Endothelial cell of umbilical vein (primary cell): ENCODE measurements at regions of chr7 and their contacts with region 1.

Region 1: GRCh38 chr7:131040467-131040932 is 287.2 kb upstream of the MKLN1 start:
- DNase-seq: peak; percentile 82
- H3K4me3 ChIP-seq: no peak overlapping the region
- H3K27ac ChIP-seq: no peak overlapping the region
- H3K4me1 ChIP-seq: peaks cover 9% of the 10 kb centered on the region
- H3K27me3 ChIP-seq: no peaks in the 10 kb centered on the region
- CTCF ChIP-seq: peak; percentile 81 to 83
- POLR2A ChIP-seq: no peak

Region 2: GRCh38 chr7:130838738-130839137 is 201.8 kb before region 1 on chr7:
- CTCF ChIA-PET with region 1: interaction called, 3 read pairs
- POLR2A ChIA-PET with region 1: no interaction called
- dilution Hi-C with region 1: no loop called
- intact Hi-C with region 1: loop called (anchors 5 kb)
- DNase-seq: peak; percentile 62
- H3K4me3 ChIP-seq: no peak overlapping the region
- H3K27ac ChIP-seq: peak overlapping the region; percentile 64
- H3K4me1 ChIP-seq: peaks cover 31% of the 10 kb centered on the region
- H3K27me3 ChIP-seq: no peaks in the 10 kb centered on the region
- CTCF ChIP-seq: no peak
- POLR2A ChIP-seq: no peak

Region 3: DNA sequence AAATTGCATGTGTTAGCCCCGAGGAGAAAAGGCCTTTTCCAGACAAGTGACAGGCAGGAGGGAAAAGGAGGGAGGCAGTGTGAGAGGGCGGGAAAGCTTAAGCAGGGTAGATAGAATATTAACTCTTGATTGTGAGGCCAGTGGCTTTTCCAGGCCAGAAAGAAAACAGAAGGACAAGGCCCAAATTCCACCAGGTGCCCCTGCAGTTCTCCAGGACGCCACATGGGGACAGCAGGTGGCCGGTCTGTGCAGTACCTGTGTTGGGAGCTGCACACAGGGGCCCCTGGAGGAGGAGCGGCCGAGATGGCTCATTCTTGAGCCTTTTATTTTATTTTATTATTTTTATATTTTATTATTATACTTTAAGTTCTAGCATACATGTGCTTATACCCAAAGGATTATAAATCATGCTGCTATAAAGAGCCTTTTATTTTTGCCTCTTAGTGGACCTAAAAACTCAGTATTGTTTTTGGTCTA is 165.2 kb before region 1 on chr7:
- CTCF ChIA-PET with region 1: interaction called, 25 read pairs
- POLR2A ChIA-PET with region 1: no interaction called
- dilution Hi-C with region 1: no loop called
- intact Hi-C with region 1: loop called (anchors 1 kb)
- DNase-seq: peak; percentile 40
- H3K4me3 ChIP-seq: no peak overlapping the region
- H3K27ac ChIP-seq: no peak overlapping the region
- H3K4me1 ChIP-seq: peaks cover 5% of the 10 kb centered on the region
- H3K27me3 ChIP-seq: no peaks in the 10 kb centered on the region
- CTCF ChIP-seq: peak; percentile 58 to 84
- POLR2A ChIP-seq: peak; percentile 35

Region 4: GRCh38 chr7:131007394-131008330 is 32.8 kb before region 1 on chr7:
- CTCF ChIA-PET with region 1: interaction called, 15 read pairs
- POLR2A ChIA-PET with region 1: no interaction called
- dilution Hi-C with region 1: no loop called
- intact Hi-C with region 1: loop called (anchors 1 kb)
- DNase-seq: peak; percentile 71
- H3K4me3 ChIP-seq: no peak overlapping the region
- H3K27ac ChIP-seq: peak overlapping the region; percentile 24
- H3K4me1 ChIP-seq: peaks cover 6% of the 10 kb centered on the region
- H3K27me3 ChIP-seq: no peaks in the 10 kb centered on the region
- CTCF ChIP-seq: peak; percentile 47 to 49
- POLR2A ChIP-seq: no peak

Region 5: DNA sequence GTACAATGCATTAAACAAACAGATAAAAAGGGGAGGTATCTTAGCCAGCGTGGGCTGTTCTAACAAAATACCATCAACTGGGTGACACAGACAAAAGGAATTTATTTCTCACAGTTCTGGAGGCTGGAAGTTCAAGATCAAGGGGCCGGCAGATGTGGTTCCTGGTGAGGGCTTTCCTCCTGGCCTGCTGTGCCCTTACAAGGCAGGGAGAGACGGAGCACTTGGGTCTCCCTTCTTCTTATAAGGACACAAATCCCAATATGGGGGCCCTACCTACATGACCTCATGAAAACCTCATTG is 24.9 kb before region 1 on chr7:
- CTCF ChIA-PET with region 1: interaction called, 11 read pairs
- POLR2A ChIA-PET with region 1: interaction called, 3 read pairs
- dilution Hi-C with region 1: no loop called
- intact Hi-C with region 1: no loop called
- DNase-seq: peak; percentile 17
- H3K4me3 ChIP-seq: no peak overlapping the region
- H3K27ac ChIP-seq: no peak overlapping the region
- H3K4me1 ChIP-seq: peaks cover 7% of the 10 kb centered on the region
- H3K27me3 ChIP-seq: no peaks in the 10 kb centered on the region
- CTCF ChIP-seq: no peak
- POLR2A ChIP-seq: no peak

Region 6: DNA sequence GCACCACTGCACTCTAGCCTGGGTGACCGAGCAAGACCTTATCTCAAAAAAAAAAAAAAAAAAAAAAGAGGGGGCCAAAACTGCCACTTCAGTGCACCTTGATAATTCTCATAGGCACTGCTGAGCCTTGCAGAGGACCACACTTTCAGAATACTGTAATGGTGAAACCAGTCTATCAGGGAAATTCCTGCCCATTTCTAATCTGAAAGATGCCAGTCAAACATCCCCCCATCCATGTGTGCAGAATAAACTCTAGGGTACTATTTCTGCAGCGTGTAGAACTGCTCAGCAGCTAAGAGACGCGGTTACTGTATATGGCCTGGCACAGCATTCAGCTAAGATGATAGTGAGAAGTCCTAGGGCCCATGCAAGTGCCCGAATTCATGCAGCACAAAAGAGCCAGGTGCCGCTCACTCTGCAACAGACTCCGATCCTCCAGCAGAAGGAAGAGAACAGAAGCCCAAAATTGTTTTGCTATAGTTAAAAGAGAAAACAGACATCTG is 19.7 kb before region 1 on chr7:
- CTCF ChIA-PET with region 1: interaction called, 11 read pairs
- POLR2A ChIA-PET with region 1: interaction called, 3 read pairs
- dilution Hi-C with region 1: no loop called
- intact Hi-C with region 1: no loop called
- DNase-seq: no peak
- H3K4me3 ChIP-seq: no peak overlapping the region
- H3K27ac ChIP-seq: no peak overlapping the region
- H3K4me1 ChIP-seq: peaks cover 5% of the 10 kb centered on the region
- H3K27me3 ChIP-seq: no peaks in the 10 kb centered on the region
- CTCF ChIP-seq: no peak
- POLR2A ChIP-seq: no peak

Region 7: DNA sequence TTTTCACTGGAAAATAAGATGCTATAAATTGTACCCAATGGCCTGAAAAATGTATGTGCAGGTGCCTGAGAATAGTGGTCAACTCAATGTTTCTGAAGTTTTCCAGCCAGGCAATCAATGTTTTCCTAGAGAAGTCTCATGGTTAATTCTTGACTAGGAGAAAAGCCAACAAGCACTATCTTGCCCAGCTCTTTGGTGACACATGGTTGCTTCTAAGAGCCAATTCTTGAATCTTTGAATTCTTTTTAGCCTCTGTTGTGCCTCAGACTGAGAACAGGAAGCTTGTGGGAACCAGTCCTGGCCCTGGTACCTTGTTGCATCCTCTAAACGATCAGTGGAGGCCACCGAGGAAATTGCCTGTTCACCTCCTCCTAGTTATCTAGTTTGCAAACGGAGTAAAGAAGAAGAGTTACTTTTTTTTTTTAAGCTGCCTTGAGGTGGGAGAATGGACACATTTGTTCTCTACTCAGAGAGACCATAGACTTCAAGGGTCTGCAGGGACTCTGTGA is 143.2 kb after region 1 on chr7:
- CTCF ChIA-PET with region 1: no interaction called
- POLR2A ChIA-PET with region 1: no interaction called
- dilution Hi-C with region 1: no loop called
- intact Hi-C with region 1: no loop called
- DNase-seq: no peak
- H3K4me3 ChIP-seq: no peak overlapping the region
- H3K27ac ChIP-seq: no peak overlapping the region
- H3K4me1 ChIP-seq: peaks cover 5% of the 10 kb centered on the region
- H3K27me3 ChIP-seq: no peaks in the 10 kb centered on the region
- CTCF ChIP-seq: no peak
- POLR2A ChIP-seq: no peak